Endothelial cell of umbilical vein (primary cell): ENCODE measurements at regions of chr9 and their contacts with region 1.

Region 1: GRCh38 chr9:37151812-37152211 is 31.4 kb downstream of the ZCCHC7 start:
- DNase-seq: peak; percentile 15
- H3K4me3 ChIP-seq: no peak overlapping the region
- H3K27ac ChIP-seq: no peak overlapping the region
- H3K4me1 ChIP-seq: peaks cover under 1% of the 10 kb centered on the region
- H3K27me3 ChIP-seq: no peaks in the 10 kb centered on the region
- CTCF ChIP-seq: no peak
- POLR2A ChIP-seq: no peak

Region 2: GRCh38 chr9:37126214-37126788 is 25.5 kb before region 1 on chr9:
- CTCF ChIA-PET with region 1: interaction called, 3 read pairs
- POLR2A ChIA-PET with region 1: interaction called, 11 read pairs
- dilution Hi-C with region 1: no loop called
- intact Hi-C with region 1: no loop called
- DNase-seq: no peak
- H3K4me3 ChIP-seq: no peak overlapping the region
- H3K27ac ChIP-seq: no peak overlapping the region
- H3K4me1 ChIP-seq: peaks cover 6% of the 10 kb centered on the region
- H3K27me3 ChIP-seq: no peaks in the 10 kb centered on the region
- CTCF ChIP-seq: no peak
- POLR2A ChIP-seq: no peak

Region 3: GRCh38 chr9:37187713-37188439 is 36.1 kb after region 1 on chr9:
- CTCF ChIA-PET with region 1: no interaction called
- POLR2A ChIA-PET with region 1: no interaction called
- dilution Hi-C with region 1: no loop called
- intact Hi-C with region 1: no loop called
- DNase-seq: no peak
- H3K4me3 ChIP-seq: no peak overlapping the region
- H3K27ac ChIP-seq: no peak overlapping the region
- H3K4me1 ChIP-seq: peaks cover 6% of the 10 kb centered on the region
- H3K27me3 ChIP-seq: no peaks in the 10 kb centered on the region
- CTCF ChIP-seq: no peak
- POLR2A ChIP-seq: no peak